Sigmoid colon (tissue), 7 donors: ENCODE measurements at regions of chr4 and their contacts with region 1.

Region 1: GRCh38 chr4:41644288-41644914 is 104.1 kb downstream of the PHOX2B start:
- DNase-seq: peak; percentile 87
- H3K4me3 ChIP-seq: peak overlapping the region in 3 of 4 donors; percentile 14 to 34 (median 33)
- H3K27ac ChIP-seq: no peak overlapping the region
- H3K4me1 ChIP-seq: peaks cover 0 to 18% (median 18%) of the 10 kb centered on the region in 4 donors
- H3K27me3 ChIP-seq: no peaks in the 10 kb centered on the region
- CTCF ChIP-seq: peak; percentile 69 to 92 (median 84)
- EP300 ChIP-seq: no peak
- POLR2A ChIP-seq: no peak

Region 2: DNA sequence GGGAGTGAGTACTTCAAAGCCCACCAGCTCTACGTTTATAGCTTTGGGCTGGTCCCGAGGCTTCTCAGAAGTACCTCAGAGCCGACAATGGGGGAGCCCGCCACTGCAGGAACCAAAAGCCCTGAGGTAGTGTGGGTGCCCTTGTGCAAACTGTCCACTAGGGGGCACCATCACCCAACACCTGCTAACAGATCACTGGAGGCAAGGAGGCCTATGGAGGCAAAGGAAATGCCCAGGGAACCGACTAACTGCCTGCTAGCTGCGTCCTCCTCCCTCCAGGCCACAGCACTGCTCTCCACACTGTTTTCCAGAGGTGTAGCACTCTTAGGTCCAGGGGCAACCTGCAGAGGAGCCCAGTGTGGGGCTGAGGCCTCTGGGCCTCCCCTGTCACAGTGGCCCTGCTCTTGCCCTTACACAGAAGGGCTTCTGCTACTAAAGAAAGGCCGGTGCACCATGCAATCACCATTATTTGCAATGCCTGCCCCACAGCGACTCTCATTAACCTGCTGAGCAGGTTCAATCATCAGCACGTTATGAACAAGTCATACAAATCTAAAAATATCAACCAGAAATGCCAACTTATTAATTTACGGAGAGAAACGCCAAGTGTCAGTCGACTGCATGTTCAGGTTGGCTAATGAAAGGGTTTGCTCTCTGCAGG is 735.6 kb before region 1 on chr4:
- intact Hi-C with region 1: loop called (anchors 10 kb)
- DNase-seq: peak; percentile 78
- H3K4me3 ChIP-seq: no peak overlapping the region
- H3K27ac ChIP-seq: peak overlapping the region in 2 of 4 donors; percentile 11 to 68
- H3K4me1 ChIP-seq: peaks cover 0 to 25% (median 13%) of the 10 kb centered on the region in 4 donors
- H3K27me3 ChIP-seq: no peaks in the 10 kb centered on the region
- CTCF ChIP-seq: peak; percentile 61 to 85 (median 77)
- EP300 ChIP-seq: no peak
- POLR2A ChIP-seq: no peak

Region 3: DNA sequence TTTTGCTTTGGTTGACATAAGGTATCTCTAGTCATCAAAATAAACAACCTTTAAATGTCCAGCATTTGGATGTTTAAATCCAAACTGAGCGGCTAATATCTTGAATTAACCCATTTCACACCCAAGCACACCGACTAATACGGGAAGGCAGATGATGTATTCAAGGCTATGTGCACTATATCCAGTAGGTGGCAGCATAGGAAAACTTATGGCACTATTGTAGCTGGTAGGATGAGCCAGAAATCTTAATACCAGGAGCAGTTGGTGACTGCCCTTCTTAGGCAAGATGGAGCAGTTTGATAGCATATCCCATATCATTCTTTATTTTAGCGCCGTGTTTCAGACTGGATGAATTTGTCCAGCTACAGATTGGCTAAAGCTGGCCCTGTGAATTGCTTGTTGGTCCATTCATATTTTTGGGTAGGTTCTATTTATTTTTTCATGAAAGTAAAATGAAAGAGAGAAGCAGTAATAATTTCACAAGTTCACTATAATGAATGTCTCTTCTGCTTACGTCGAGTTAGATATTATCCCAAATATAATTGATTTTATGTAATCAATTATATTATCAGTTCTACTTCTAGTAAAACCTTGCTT is 363.3 kb before region 1 on chr4:
- intact Hi-C with region 1: loop called (anchors 1 kb)
- DNase-seq: peak; percentile 64
- H3K4me3 ChIP-seq: no peak overlapping the region
- H3K27ac ChIP-seq: no peak overlapping the region
- H3K4me1 ChIP-seq: no peaks in the 10 kb centered on the region
- H3K27me3 ChIP-seq: no peaks in the 10 kb centered on the region
- CTCF ChIP-seq: peak; percentile 75 to 94 (median 83)
- EP300 ChIP-seq: no peak
- POLR2A ChIP-seq: no peak

Region 4: DNA sequence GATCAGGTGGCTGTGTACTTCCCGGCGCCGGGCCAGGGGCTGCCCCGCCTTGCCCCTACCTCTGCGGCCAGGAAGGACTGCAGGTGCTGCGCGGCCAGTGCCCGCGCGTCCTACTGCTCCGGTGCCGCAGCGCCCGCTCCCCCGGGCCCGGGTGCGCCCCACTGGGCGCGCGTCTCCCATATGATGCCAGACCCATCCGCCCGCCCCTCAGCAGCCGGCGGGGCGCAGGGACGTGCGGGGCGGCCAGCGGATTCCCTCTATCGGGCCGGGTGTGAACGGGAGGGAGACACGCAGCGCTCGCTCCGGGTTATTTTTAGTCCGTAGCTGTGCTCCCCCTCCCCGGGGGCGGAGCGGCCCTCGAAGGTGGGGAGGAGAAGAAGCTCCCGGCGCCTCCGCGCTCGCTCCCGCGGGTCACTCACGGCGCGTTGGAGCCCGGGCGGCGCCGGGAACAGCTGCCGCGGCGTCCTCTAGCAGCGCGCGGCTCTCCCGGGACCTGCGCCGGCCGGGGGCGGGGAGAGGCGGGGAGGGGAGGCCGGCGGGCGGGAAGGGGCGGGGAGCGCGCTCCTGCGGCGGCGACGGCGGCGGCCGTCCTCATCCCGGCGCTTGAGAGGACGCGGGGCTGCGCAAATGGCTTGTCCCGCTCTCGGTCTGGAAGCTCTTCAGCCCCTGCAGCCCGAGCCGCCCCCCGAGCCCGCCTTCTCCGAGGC is 284.0 kb before region 1 on chr4:
- intact Hi-C with region 1: loop called (anchors 2 kb)
- DNase-seq: peak; percentile 81
- H3K4me3 ChIP-seq: peak overlapping the region; percentile 70 to 93 (median 86)
- H3K27ac ChIP-seq: peak overlapping the region; percentile 71 to 91 (median 82)
- H3K4me1 ChIP-seq: peaks cover 0 to 27% (median 10%) of the 10 kb centered on the region in 4 donors
- H3K27me3 ChIP-seq: no peaks in the 10 kb centered on the region
- CTCF ChIP-seq: no peak
- EP300 ChIP-seq: no peak
- POLR2A ChIP-seq: no peak

Region 5: DNA sequence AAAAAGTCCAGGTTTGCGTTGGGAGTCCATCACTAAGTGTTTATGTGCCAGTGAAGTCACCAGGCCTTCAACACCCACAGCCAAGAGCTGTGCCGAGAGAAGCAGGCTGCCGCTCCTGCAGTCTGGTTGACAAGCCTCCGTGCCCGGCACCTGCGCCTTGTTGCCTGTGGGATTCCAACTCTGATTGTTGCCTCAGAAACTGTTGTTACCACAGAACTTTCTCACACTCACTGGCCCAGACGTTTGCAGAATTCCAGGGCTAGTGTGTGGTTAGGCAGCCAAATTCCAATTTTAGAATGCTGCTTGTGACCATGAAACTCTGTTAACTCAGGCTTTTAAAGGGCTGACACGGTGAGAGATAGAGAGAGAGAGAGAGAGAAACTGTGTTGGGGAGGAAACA is 226.0 kb before region 1 on chr4:
- intact Hi-C with region 1: loop called (anchors 5 kb)
- DNase-seq: peak; percentile 71
- H3K4me3 ChIP-seq: peak overlapping the region in 1 of 4 donors; percentile 16
- H3K27ac ChIP-seq: peak overlapping the region in 3 of 4 donors; percentile 53 to 80 (median 65)
- H3K4me1 ChIP-seq: peaks cover 0 to 18% (median 11%) of the 10 kb centered on the region in 4 donors
- H3K27me3 ChIP-seq: no peaks in the 10 kb centered on the region
- CTCF ChIP-seq: no peak
- EP300 ChIP-seq: peak in 1 of 4 donors; percentile 14
- POLR2A ChIP-seq: no peak

Region 6: GRCh38 chr4:41538017-41538733 is 106.2 kb before region 1 on chr4 and contains the start of gene LIMCH1:
- intact Hi-C with region 1: loop called (anchors 5 kb)
- DNase-seq: peak; percentile 83
- H3K4me3 ChIP-seq: peak within 1 kb of the TSS in 3 of 4 donors; percentile 8 to 22 (median 12)
- H3K27ac ChIP-seq: peak within 1 kb of the TSS; percentile 59 to 79 (median 76)
- H3K4me1 ChIP-seq: peaks cover 0 to 50% (median 35%) of the 10 kb centered on the region in 4 donors
- H3K27me3 ChIP-seq: no peaks in the 10 kb centered on the region
- CTCF ChIP-seq: no peak
- EP300 ChIP-seq: no peak
- POLR2A ChIP-seq: no peak
- total RNA-seq, gene LIMCH1: 6.7 to 26.0 (median 14.2) TPM

Region 7: GRCh38 chr4:41757521-41758156 is 113.2 kb after region 1 on chr4:
- intact Hi-C with region 1: no loop called
- DNase-seq: no peak
- H3K4me3 ChIP-seq: no peak overlapping the region
- H3K27ac ChIP-seq: no peak overlapping the region
- H3K4me1 ChIP-seq: no peaks in the 10 kb centered on the region
- H3K27me3 ChIP-seq: peaks cover 0 to 62% (median 8%) of the 10 kb centered on the region in 3 donors
- CTCF ChIP-seq: no peak
- EP300 ChIP-seq: no peak
- POLR2A ChIP-seq: no peak